ENCODE measurements at regions of chr3 and their contacts with region 1.

Region 1: GRCh38 chr3:32340039-32340438 is 51.6 kb upstream of the CMTM7 start:
- DNase-seq: peak; percentile 35
- ATAC-seq: peak; percentile 88
- H3K4me3 ChIP-seq: no peak overlapping the region
- H3K27ac ChIP-seq: no peak overlapping the region
- H3K4me1 ChIP-seq: no peaks in the 10 kb centered on the region
- H3K27me3 ChIP-seq: no peaks in the 10 kb centered on the region
- CTCF ChIP-seq: peak; percentile 51 to 72 (median 57)
- POLR2A ChIP-seq: no peak
- RAD21 ChIP-seq: peak; percentile 85

Region 2: DNA sequence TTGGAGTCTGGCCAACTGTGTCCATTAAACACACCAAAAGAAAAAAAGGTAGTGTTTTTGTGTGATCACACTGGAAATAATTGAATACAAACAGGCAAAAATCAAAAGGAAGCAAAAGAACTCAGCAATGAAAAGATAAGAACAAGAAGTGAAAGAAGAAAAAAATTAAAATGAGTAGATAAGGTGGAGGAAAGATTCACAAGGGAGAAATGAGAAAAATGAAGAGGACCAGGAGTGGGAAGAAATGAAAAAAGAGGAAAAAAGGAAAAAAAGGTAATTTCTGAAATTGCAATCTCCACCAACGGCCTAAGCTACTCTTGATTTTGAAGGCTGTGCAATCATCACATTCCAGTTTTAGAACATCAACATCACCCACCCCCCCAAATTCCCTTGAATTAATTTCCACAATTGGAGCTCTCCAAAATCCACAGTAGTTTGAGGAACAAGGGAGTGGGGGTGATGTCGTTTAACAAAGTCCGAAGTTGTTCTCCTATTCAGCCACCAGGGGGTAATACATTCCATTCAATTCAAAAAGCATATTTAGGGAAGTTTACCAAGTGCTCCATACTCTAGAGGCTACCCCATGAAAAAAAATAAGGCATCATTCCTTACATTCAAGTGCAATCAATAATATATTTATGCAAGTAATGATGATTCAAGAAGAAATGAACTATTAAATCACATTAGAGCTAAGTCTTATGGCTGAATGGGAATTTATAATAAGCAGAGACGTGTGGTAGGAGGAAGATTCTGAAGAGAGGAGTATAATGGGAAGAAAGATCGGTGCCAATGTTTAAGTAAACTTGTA is 321.1 kb before region 1 on chr3:
- CTCF ChIA-PET with region 1: no interaction called
- POLR2A ChIA-PET with region 1: no interaction called
- RAD21 ChIA-PET with region 1: no interaction called
- intact Hi-C with region 1: loop called (anchors 2 kb)
- DNase-seq: peak; percentile 54
- ATAC-seq: peak; percentile 94
- H3K4me3 ChIP-seq: no peak overlapping the region
- H3K27ac ChIP-seq: no peak overlapping the region
- H3K4me1 ChIP-seq: no peaks in the 10 kb centered on the region
- H3K27me3 ChIP-seq: no peaks in the 10 kb centered on the region
- CTCF ChIP-seq: peak; percentile 66 to 86 (median 79)
- POLR2A ChIP-seq: no peak
- RAD21 ChIP-seq: peak; percentile 86

Region 3: DNA sequence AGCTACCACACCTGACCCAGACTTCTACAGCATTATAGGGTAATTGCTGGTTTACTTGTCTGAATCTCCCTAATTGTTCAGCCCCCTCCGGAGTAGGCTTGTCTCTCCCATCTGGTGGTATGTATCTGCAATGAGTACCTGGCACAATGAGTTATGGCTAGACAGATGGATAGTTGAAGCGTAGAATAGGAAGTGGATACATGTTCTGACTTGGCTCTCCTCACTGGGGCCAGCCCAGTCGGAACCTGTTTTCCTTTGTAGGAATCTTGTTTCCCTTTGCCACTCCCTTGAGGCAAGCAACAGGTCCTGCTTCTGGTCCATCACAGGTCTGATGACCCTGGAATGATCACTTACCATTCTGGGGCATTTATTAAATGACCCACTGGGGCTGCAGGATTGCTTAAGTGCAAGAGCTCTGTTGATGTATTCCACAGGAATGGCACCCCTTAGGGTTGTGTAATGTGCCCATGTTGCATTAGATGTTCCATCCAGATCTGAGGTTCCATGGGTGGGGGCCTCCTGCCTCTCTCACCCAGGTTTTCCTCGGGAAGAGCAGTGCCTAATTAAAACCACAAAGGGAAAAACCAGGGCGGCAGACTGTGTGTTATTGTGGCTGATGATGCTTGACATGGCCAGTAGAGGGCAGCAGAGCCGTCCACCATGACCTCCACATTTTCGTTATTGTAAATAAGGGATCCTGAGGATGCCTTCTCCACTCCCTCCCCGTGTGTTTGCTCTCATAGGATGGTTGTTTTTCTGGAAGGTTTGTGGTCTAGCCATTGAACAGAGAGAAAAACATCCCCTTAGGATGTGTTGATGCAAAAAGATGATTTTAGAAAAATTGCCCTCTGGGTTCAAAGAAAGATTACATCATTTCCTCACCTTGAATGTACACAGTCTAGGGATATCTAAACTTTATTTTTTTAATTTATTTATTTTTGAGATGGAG is 43.5 kb before region 1 on chr3:
- CTCF ChIA-PET with region 1: interaction called, 3 read pairs
- POLR2A ChIA-PET with region 1: no interaction called
- RAD21 ChIA-PET with region 1: no interaction called
- intact Hi-C with region 1: loop called (anchors 1 kb)
- DNase-seq: peak; percentile 52
- ATAC-seq: peak; percentile 92
- H3K4me3 ChIP-seq: no peak overlapping the region
- H3K27ac ChIP-seq: no peak overlapping the region
- H3K4me1 ChIP-seq: peaks cover 15 to 28% of the 10 kb centered on the region in 2 experiments
- H3K27me3 ChIP-seq: no peaks in the 10 kb centered on the region
- CTCF ChIP-seq: peak; percentile 76 to 94 (median 83)
- POLR2A ChIP-seq: no peak
- RAD21 ChIP-seq: peak; percentile 84